Common myeloid progenitor, CD34-positive (primary cell): ENCODE measurements at regions of chr15 and their contacts with region 1.

Region 1: DNA sequence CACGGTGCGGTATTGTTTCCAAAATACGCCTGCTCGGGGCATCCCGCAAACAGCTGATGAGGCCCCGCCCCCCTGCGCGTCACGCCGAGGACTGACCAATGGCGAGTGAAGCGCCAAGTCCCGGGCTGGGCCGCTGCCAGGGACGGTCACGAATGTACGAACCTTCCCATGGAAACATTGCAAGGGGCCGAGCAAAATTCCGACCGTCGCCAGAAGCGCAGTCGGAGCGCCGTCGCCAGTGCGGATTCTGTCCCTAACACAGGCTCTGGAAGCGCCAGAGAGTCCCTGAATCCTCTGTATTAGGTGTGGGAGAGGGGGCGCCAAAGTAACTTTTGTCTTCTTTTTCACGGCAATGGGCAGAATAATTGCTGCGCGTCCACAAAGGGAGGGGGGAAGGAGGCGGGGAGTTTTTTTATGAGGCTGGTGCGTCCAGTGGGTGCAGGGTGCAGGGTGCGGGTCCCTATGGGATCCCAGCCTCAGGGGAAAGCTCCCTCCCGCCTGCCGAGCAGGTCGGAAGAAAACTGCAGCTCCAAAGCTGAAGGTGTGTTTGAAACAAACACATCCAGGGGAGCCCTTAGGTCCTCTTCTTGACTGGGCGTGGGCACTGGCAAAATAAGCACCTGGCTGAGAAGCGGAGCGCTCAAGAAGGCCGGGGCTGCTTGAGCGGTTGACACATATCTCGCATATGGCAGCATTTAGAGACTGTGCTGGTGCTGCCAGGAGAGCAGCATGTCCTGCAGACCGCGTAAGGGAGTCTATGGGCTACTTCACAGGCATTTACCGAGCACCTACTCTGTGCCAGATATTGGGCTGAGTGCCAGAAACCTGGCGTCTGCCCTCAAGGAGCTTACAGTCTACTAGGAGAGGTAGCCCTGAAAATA is at the start of gene BMF:
- DNase-seq: peak; percentile 99
- H3K4me3 ChIP-seq: peak within 1 kb of the TSS; percentile 71 to 92 (median 76)
- H3K27ac ChIP-seq: peak within 1 kb of the TSS in 1 of 2 experiments; percentile 56
- H3K4me1 ChIP-seq: peaks cover 12 to 53% (median 50%) of the 10 kb centered on the region in 4 experiments
- H3K27me3 ChIP-seq: no peaks in the 10 kb centered on the region

Region 2: GRCh38 chr15:39761006-39761405 is 348.1 kb before region 1 on chr15:
- CTCF ChIA-PET with region 1: no interaction called
- POLR2A ChIA-PET with region 1: no interaction called
- DNase-seq: no peak
- H3K4me3 ChIP-seq: no peak overlapping the region
- H3K27ac ChIP-seq: no peak overlapping the region
- H3K4me1 ChIP-seq: no peaks in the 10 kb centered on the region
- H3K27me3 ChIP-seq: no peaks in the 10 kb centered on the region

Region 3: GRCh38 chr15:40038638-40039543 is 70.2 kb before region 1 on chr15 and contains the start of gene SRP14:
- CTCF ChIA-PET with region 1: interaction called, 224 read pairs
- POLR2A ChIA-PET with region 1: no interaction called
- DNase-seq: peak; percentile 95 to 97 (median 96)
- H3K4me3 ChIP-seq: peak within 1 kb of the TSS; percentile 59 to 97 (median 94)
- H3K27ac ChIP-seq: peak within 1 kb of the TSS; percentile 92 to 96
- H3K4me1 ChIP-seq: peaks cover 7 to 24% (median 17%) of the 10 kb centered on the region in 4 experiments
- H3K27me3 ChIP-seq: no peaks in the 10 kb centered on the region

Region 4: DNA sequence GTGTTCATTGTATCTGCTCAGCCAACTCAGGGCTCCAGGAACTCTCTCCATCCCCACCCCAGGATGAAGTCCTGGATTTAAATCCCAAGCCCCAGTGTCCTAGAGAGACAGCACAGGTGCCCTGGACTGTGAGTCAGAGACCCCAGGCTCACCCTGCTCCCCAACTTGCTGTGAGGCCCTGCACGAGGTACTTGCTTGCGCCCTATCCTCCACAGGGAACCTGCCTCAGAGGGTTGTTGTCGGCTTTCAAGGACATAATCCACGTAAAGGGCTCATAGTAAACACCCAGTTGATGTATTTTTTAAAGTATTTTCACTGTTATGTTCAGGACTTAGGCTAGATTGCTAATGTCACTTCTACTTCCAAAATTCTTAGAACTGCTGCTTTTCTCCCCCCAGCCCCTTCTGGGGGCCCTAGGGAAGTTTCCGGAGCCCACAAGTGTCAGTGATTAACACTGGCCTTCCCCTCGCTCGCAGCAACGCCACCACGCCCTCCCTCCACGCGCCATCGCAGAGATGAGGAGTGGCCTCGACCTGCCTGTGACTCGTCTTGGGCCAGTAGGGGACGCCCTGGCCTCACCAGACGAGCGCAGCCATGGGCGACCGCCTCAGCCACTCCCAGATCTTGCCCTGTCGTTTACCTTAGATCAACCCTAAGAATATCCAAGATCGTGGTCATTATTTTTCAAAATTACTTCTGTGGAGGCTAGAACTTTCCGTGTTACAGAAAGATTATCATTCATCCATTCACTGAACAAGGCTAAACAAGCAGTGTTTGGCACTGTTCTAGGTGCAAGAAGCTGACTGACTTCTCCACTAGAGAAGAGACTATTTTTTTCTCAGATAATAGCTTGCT is 64.2 kb before region 1 on chr15:
- CTCF ChIA-PET with region 1: interaction called, 224 read pairs
- POLR2A ChIA-PET with region 1: interaction called, 15 read pairs
- DNase-seq: peak; percentile 84 to 88 (median 84)
- H3K4me3 ChIP-seq: peak overlapping the region in 4 of 7 experiments; percentile 37 to 65 (median 46)
- H3K27ac ChIP-seq: peak overlapping the region in 1 of 2 experiments; percentile 59
- H3K4me1 ChIP-seq: peaks cover 13 to 62% (median 55%) of the 10 kb centered on the region in 4 experiments
- H3K27me3 ChIP-seq: no peaks in the 10 kb centered on the region

Region 5: DNA sequence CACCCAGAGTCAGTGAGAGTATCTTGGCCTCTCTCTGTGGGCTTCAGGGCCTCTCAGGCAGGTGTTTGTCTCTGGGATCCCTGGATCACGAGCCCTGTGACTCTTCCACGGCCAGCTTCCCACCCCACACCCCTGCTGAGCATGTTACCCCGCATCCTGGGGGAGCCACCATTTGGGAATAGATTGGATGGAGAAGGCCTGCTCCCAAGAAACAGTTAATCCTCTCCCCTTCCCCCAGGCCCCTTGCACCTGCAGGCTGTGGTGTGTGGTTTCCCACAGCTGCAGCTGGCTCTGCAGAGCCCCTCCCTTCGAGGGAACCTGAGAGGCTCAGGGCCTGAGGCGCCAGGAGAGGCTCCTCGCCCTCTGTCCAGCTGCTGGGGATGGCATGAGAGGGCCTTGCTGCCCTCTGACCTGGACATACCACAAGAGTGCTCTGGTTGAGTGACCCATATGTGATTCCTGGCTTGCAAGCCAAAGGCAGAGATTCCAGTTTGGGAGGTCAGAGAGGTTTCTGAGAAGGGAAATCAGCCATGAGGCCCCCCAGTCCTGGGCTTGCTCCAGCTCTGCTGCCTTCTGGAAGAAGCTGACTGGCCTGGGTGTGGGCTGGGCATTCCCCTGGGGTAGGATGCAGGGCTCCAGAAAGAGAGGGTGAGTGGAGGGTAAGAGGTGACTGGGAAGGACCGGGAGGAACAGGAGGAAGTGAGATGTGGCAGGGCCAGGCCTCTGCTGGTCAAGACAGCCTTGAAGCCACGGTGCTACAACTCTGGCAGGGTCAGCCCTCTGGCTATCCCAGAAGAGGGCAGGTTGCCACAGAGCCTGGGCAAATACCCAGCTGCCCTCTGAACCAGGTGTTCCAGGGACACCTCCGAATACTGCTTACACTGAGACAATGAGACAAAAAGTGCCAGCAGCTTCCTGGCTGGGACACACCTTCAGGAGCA is 54.2 kb before region 1 on chr15:
- CTCF ChIA-PET with region 1: interaction called, 224 read pairs
- POLR2A ChIA-PET with region 1: interaction called, 7 read pairs
- DNase-seq: peak in 2 of 3 donors; percentile 72 to 76
- H3K4me3 ChIP-seq: peak overlapping the region in 2 of 7 experiments; percentile 12 to 20
- H3K27ac ChIP-seq: no peak overlapping the region
- H3K4me1 ChIP-seq: peaks cover 8 to 72% (median 50%) of the 10 kb centered on the region in 4 experiments
- H3K27me3 ChIP-seq: no peaks in the 10 kb centered on the region

Region 6: DNA sequence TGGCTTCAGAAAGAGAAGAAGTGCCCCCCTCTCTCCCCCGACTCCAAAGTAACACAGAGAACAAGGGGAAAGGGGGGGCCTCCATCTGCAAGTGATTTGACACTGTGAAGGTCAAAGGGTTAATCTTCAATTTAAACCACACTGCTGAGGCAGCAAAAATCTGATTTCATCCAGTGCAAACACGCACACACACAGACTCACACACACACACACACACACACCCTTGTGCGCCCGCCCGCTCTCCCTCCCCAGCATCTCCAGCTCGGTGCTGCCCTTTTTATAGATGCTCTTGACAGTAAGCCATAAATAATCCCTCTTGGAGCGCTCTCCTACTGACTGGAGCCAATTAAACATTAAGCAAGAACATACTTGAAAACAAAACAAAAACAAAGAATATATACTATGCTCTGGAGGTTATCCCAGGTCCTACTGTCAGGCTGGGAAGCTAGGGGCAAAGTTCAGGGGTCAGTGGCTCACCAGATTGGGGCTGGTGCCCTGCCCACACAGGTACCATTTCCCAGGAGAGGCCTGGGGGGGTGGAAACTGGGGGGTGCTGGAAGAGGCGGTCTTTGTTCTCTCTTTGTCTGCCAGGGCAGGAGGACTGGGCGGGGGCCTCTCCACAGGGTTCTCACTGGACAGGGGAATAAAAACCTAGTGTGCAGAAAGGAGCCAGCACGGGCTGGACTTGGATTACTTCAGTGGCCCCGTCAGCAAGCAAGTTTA is 16.7 kb before region 1 on chr15:
- CTCF ChIA-PET with region 1: interaction called, 117 read pairs
- POLR2A ChIA-PET with region 1: interaction called, 4 read pairs
- DNase-seq: peak in 2 of 3 donors; percentile 52 to 62
- H3K4me3 ChIP-seq: no peak overlapping the region
- H3K27ac ChIP-seq: no peak overlapping the region
- H3K4me1 ChIP-seq: peaks cover 0 to 76% (median 51%) of the 10 kb centered on the region in 4 experiments
- H3K27me3 ChIP-seq: no peaks in the 10 kb centered on the region

Region 7: DNA sequence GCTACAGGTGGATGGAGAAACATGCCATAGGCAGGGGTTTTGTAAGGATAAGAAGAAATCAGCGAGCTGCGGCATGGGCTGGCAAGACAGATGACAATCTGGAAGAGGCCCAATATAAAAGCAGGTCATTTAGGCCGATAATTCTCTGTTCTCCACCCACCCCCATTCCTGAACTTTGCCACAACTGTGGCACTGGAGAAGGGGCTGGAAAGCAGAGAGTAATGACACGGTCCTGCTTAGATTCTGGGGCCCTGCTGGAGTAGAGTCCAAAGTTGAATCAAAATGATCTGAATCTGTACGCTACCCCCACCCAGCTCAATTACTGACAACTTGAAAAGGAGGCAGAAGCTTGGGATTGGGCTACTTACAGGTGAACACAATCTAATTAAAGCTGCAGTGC is 33.3 kb after region 1 on chr15:
- CTCF ChIA-PET with region 1: interaction called, 12 read pairs
- POLR2A ChIA-PET with region 1: no interaction called
- DNase-seq: no peak
- H3K4me3 ChIP-seq: no peak overlapping the region
- H3K27ac ChIP-seq: no peak overlapping the region
- H3K4me1 ChIP-seq: no peaks in the 10 kb centered on the region
- H3K27me3 ChIP-seq: no peaks in the 10 kb centered on the region

Region 8: DNA sequence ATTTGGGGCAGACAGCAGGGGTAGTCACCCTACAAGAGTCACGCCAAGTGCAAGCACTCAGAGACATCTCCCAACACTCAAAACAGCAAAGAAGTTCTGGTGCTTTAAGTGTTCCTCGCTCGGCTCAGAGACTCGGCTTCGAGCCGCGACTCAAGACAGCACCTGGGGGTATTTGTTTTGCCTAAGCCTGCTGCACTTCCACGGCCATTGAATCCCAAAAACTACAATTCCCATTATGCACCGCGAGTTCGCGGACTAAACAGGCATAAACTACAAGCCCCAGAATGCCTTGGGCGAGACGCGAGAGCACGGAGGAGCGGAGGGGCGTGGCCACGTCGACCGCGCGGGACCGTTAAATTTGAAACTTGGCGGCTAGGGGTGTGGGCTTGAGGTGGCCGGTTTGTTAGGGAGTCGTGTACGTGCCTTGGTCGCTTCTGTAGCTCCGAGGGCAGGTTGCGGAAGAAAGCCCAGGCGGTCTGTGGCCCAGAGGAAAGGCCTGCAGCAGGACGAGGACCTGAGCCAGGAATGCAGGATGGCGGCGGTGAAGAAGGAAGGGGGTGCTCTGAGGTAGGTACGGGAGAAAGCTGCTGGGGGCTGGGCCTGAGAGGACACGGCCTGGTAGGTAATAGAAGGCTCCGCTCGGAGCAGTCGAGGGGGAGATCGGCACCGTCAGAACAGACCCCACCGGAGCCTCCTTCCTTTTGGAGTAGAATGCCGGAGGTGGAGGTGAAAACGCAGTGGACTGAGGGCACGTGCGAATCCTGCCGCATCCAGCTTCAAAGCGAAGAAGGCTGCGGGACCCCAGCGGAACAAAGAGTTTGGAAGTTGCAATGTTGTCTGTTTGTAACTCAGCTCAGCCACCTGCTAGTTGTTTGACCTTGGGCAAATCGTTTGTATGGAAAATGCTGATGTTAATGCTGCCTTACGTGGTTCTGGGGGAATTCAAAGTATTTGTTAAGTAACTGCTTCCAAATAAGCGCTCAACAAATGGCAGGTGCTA is 51.9 kb after region 1 on chr15 and contains the start of gene BUB1B:
- CTCF ChIA-PET with region 1: interaction called, 23 read pairs
- POLR2A ChIA-PET with region 1: no interaction called
- DNase-seq: peak; percentile 91 to 96 (median 96)
- H3K4me3 ChIP-seq: peak within 1 kb of the TSS; percentile 93 to 99 (median 97)
- H3K27ac ChIP-seq: peak within 1 kb of the TSS in 1 of 2 experiments; percentile 62
- H3K4me1 ChIP-seq: peaks cover 8 to 27% (median 20%) of the 10 kb centered on the region in 4 experiments
- H3K27me3 ChIP-seq: no peaks in the 10 kb centered on the region

Region 9: DNA sequence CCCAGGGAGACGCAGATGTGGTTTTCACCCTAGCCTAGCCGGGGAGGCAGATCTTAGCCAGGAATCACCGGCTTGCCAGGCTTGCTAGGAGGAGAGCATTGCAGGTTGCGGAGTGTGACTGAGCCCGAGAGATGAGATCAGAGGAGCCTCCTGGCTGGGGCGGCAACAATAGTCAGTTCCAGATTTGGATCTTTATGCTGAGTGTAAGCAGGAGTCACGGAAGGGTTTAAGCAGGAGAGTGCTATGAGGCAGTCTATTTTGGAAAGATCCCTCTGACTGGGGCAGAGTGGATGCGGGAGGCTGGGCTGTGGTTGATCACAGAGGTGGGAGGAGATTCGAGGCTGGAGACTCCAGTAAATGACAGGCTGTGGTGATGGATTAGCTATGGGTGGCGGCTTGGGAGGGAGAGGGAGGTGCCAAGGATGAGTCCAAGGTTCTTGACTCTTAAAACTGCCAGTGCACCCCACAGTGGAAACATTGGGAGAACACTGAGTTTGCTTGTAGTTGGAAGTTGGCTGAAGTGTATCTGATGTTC is 321.2 kb after region 1 on chr15:
- CTCF ChIA-PET with region 1: no interaction called
- POLR2A ChIA-PET with region 1: no interaction called
- DNase-seq: peak in 2 of 3 donors; percentile 13 to 17
- H3K4me3 ChIP-seq: no peak overlapping the region
- H3K27ac ChIP-seq: no peak overlapping the region
- H3K4me1 ChIP-seq: peaks cover 0 to 5% (median 2%) of the 10 kb centered on the region in 4 experiments
- H3K27me3 ChIP-seq: peaks cover 0 to 12% (median 11%) of the 10 kb centered on the region in 5 experiments